ENCODE measurements at regions of chr2 and their contacts with region 1.

Region 1: DNA sequence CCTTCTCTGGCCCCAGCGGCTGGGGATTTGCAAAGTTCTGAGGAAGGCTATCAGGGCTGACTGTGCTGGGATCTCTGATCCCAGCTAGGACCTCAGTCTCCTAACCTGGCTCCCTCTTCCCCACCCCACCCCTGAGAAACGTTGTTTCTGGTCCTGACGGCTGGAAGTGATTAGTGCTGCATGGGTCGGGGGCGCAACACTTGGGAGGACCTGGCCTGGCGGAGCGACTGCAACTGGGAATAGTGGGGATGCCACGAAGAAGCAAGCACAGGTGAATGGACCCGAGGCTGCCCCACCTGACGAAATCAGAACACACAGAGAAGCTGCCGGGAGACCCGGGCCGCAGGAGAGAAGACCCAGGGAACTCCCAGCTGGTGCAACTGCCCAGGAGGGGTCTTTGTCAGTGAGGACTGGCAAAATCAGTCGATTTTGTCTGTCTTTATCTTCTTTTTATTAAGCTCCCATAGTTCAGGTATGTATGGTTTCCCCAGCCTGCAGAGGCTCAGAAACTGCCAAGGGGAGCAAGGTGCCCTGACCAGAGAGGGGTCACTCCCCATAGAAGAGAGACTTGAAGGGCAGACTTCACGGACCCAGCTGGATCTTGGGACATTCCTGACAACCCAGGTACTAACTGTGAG is 656 bp upstream of the LBX2 start:
- DNase-seq: no peak
- ATAC-seq: no peak
- H3K4me3 ChIP-seq: peak overlapping the region; percentile 43 to 65
- H3K27ac ChIP-seq: peak overlapping the region; percentile 81
- H3K4me1 ChIP-seq: peaks cover 45% of the 10 kb centered on the region
- H3K27me3 ChIP-seq: no peaks in the 10 kb centered on the region
- CTCF ChIP-seq: no peak

Region 2: DNA sequence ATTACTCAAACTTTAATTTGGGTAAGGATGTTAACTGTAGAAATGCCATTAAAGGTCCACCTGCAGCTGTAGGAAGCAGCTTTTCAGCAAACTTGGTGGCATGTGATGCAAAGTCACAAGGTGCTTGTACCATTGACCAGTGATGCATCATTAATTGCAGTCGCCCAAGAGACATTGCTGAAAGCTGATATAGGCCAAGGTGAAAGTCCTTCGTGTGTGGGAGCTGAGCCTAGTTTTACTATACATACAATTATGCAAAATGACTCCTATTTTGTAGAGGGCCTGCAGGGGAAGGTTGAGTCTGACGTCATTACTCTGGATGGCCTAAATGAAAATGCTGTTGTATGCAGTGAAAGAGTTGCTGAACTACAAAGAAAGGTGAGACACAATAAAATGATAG is 1073.9 kb before region 1 on chr2:
- CTCF ChIA-PET with region 1: no interaction called
- POLR2A ChIA-PET with region 1: no interaction called
- in situ Hi-C with region 1: no loop called
- intact Hi-C with region 1: no loop called
- DNase-seq: no peak
- ATAC-seq: no peak
- H3K4me3 ChIP-seq: no peak overlapping the region
- H3K27ac ChIP-seq: no peak overlapping the region
- H3K4me1 ChIP-seq: no peaks in the 10 kb centered on the region
- H3K27me3 ChIP-seq: no peaks in the 10 kb centered on the region
- CTCF ChIP-seq: no peak

Region 3: GRCh38 chr2:74514368-74515270 is 14.6 kb after region 1 on chr2 and contains the start of gene TLX2:
- CTCF ChIA-PET with region 1: no interaction called
- POLR2A ChIA-PET with region 1: interaction called, 12 read pairs
- in situ Hi-C with region 1: no loop called
- intact Hi-C with region 1: no loop called
- DNase-seq: no peak
- ATAC-seq: peak; percentile 32
- H3K4me3 ChIP-seq: peak within 1 kb of the TSS in 1 of 2 experiments; percentile 37; a peak in 1 of 4 replicates
- H3K27ac ChIP-seq: no peak within 1 kb of the TSS
- H3K4me1 ChIP-seq: no peaks in the 10 kb centered on the region
- H3K27me3 ChIP-seq: no peaks in the 10 kb centered on the region
- CTCF ChIP-seq: no peak
- total RNA-seq, gene TLX2: not detected

Measured in Panc1 (cell line).